ENCODE measurements at regions of chr14 and their contacts with region 1.

Region 1: DNA sequence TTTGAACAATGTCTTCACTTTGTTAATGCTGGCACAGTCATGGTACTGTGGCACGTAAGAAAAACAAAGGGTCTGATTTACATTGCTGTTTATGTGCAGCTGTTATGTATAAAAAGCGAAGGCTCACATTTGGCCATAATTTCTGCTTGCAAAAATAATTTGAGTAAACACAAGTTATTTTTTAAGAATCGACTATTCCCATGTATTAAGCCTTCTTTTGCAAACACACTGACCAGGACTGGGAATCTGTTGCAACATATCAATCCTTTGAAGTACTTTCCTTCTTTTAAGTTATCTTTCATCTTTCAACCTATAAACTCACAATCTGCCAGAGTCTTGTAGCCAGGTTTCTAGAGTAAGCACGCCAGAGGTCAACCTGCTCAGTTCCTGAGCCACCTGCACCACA is 145.4 kb upstream of the BMP4 start:
- DNase-seq: no peak
- H3K4me3 ChIP-seq: no peak overlapping the region
- H3K27ac ChIP-seq: no peak overlapping the region
- H3K4me1 ChIP-seq: peaks cover 36% of the 10 kb centered on the region
- H3K27me3 ChIP-seq: no peaks in the 10 kb centered on the region
- CTCF ChIP-seq: no peak

Region 2: GRCh38 chr14:54147282-54147681 is 45.2 kb after region 1 on chr14:
- CTCF ChIA-PET with region 1: no interaction called
- dilution Hi-C with region 1: no loop called
- in situ Hi-C with region 1: no loop called
- intact Hi-C with region 1: loop called (anchors 1 kb)
- DNase-seq: peak; percentile 85
- H3K4me3 ChIP-seq: no peak overlapping the region
- H3K27ac ChIP-seq: no peak overlapping the region
- H3K4me1 ChIP-seq: peaks cover 14% of the 10 kb centered on the region
- H3K27me3 ChIP-seq: no peaks in the 10 kb centered on the region
- CTCF ChIP-seq: no peak